Gastrocnemius medialis (tissue), 4 donors: ENCODE measurements at regions of chr14 and their contacts with region 1.

Region 1: DNA sequence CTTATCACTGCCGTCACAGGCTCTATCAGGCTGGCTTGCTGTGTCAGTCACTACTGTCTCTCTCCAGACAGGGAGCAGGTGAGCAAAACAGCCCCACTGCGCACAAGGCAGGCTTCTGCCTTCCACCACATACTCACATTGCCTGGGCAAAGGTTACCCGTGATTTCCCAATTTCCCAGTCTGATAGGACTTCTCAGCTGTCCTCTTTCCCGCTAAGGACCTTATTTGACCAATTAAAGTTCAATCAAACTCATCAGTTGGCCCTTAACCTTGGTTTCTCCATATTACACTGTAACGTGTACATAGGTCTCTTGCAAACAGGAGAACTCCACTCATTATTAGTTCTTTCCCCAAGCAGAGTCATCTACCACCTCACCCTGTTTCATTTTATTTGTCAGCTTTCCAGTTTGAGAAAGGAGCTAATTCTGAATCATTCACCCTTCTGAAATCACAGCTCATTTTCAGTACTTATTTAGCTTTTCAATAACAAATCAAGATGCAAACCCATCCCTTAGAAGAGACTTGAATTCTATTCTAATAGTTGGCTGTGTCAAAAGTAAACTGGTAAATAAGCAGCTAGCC is 170.8 kb downstream of the ESR2 start:
- DNase-seq: no peak
- ATAC-seq: no peak
- H3K4me3 ChIP-seq: no peak overlapping the region
- H3K27ac ChIP-seq: no peak overlapping the region
- H3K4me1 ChIP-seq: peaks cover 10 to 11% of the 10 kb centered on the region in 2 donors
- H3K27me3 ChIP-seq: no peaks in the 10 kb centered on the region
- CTCF ChIP-seq: no peak
- POLR2A ChIP-seq: no peak

Region 2: DNA sequence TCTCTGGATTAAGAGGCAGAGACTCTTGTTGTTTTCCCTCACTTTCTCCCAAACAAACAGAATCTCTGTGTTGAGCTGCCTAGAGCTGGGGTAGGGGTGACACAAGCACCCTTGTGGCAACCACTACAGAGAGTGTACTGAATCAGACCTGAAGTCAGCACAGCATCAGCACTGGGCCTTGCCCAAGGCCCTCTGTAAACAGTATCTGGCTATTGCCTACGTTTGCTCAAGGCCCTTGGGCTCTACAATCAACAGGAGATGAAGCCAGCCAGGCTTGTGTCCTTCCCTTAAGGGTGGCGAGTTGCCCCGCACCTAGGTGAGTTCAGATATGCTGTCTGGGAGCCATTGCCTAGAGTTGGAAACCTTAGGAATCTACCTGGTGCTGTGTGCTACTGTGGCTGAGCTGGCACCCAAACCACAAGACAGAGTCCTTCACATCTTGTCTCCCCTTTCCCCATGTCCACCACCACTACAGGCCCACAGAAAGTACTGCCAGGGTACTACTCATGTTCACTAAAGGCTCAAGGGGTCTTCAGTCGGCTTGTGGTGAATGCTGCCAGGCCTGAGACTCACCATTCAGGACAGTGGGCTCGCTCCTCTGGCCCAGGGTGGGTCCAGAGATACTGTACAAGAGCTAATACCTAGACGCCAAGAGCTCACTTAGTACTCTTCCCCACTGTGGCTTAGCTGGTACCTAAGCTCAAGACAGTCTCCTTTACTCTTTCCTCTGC is 63.7 kb before region 1 on chr14:
- in situ Hi-C with region 1: no loop called
- intact Hi-C with region 1: loop called (anchors 5 kb)
- DNase-seq: no peak
- ATAC-seq: no peak
- H3K4me3 ChIP-seq: no peak overlapping the region
- H3K27ac ChIP-seq: no peak overlapping the region
- H3K4me1 ChIP-seq: no peaks in the 10 kb centered on the region
- H3K27me3 ChIP-seq: no peaks in the 10 kb centered on the region
- CTCF ChIP-seq: no peak
- POLR2A ChIP-seq: no peak

Region 3: GRCh38 chr14:64170181-64170580 is 46.8 kb after region 1 on chr14:
- in situ Hi-C with region 1: no loop called
- intact Hi-C with region 1: loop called (anchors 5 kb)
- DNase-seq: no peak
- ATAC-seq: no peak
- H3K4me3 ChIP-seq: no peak overlapping the region
- H3K27ac ChIP-seq: no peak overlapping the region
- H3K4me1 ChIP-seq: no peaks in the 10 kb centered on the region
- H3K27me3 ChIP-seq: no peaks in the 10 kb centered on the region
- CTCF ChIP-seq: no peak
- POLR2A ChIP-seq: no peak